ENCODE measurements at regions of chr10 and their contacts with region 1.

Region 1: GRCh38 chr10:21083871-21084295 is 186.8 kb upstream of the NEBL start:
- DNase-seq: peak; percentile 82
- H3K4me3 ChIP-seq: no peak overlapping the region
- H3K27ac ChIP-seq: no peak overlapping the region
- H3K4me1 ChIP-seq: no peaks in the 10 kb centered on the region
- H3K27me3 ChIP-seq: no peaks in the 10 kb centered on the region
- CTCF ChIP-seq: no peak

Region 2: DNA sequence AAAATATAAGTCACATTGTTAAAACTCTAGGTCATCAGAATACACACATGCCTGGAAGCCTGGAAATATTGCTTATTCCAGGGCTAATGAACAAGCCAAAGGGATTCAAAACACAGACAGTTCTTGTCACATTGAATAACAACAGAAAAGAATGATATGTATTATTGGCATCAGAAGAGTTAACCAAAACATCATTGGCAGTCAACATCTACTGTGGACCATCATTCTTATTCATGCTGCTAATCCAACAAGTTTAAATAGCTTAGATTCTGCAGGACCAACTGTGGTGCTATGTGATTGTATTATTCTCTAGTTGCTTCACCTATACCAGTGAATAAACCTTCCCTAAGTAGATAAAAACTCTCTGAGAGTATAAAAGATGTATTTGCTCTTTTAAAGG is 385.0 kb before region 1 on chr10:
- CTCF ChIA-PET with region 1: no interaction called
- dilution Hi-C with region 1: no loop called
- in situ Hi-C with region 1: no loop called
- intact Hi-C with region 1: no loop called
- DNase-seq: no peak
- H3K4me3 ChIP-seq: no peak overlapping the region
- H3K27ac ChIP-seq: no peak overlapping the region
- H3K4me1 ChIP-seq: no peaks in the 10 kb centered on the region
- H3K27me3 ChIP-seq: no peaks in the 10 kb centered on the region
- CTCF ChIP-seq: no peak

Region 3: DNA sequence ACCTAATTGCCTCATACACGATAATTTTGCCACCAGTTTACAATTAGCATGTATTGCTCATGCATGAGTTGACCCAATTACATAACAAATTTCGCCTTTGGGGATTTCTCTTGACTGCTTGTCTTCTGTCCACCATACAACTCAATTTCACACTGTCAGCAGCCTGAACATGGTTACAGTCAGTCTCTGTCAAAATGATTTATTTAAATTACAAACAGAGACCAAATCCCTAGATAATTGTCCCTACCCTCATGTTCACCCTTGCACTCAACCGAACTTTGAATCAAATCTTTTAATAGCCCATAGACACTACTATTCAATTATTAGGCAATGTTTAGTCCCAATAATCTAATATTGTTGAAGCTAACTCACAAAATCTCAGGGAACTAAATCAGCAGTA is 127.0 kb before region 1 on chr10:
- CTCF ChIA-PET with region 1: no interaction called
- dilution Hi-C with region 1: no loop called
- in situ Hi-C with region 1: no loop called
- intact Hi-C with region 1: no loop called
- DNase-seq: peak; percentile 16
- H3K4me3 ChIP-seq: no peak overlapping the region
- H3K27ac ChIP-seq: no peak overlapping the region
- H3K4me1 ChIP-seq: no peaks in the 10 kb centered on the region
- H3K27me3 ChIP-seq: no peaks in the 10 kb centered on the region
- CTCF ChIP-seq: no peak

Region 4: GRCh38 chr10:21039721-21040120 is 44.2 kb before region 1 on chr10:
- CTCF ChIA-PET with region 1: no interaction called
- dilution Hi-C with region 1: no loop called
- in situ Hi-C with region 1: no loop called
- intact Hi-C with region 1: no loop called
- DNase-seq: no peak
- H3K4me3 ChIP-seq: no peak overlapping the region
- H3K27ac ChIP-seq: no peak overlapping the region
- H3K4me1 ChIP-seq: no peaks in the 10 kb centered on the region
- H3K27me3 ChIP-seq: no peaks in the 10 kb centered on the region
- CTCF ChIP-seq: no peak

Region 5: GRCh38 chr10:21265621-21266020 is 181.7 kb after region 1 on chr10:
- CTCF ChIA-PET with region 1: interaction called, 3 read pairs
- dilution Hi-C with region 1: loop called (anchors 10 kb)
- in situ Hi-C with region 1: loop called (anchors 5 kb)
- intact Hi-C with region 1: no loop called
- DNase-seq: peak; percentile 83
- H3K4me3 ChIP-seq: no peak overlapping the region
- H3K27ac ChIP-seq: peak overlapping the region; percentile 6
- H3K4me1 ChIP-seq: peaks cover 19% of the 10 kb centered on the region
- H3K27me3 ChIP-seq: no peaks in the 10 kb centered on the region
- CTCF ChIP-seq: no peak